ENCODE measurements at regions of chr20 and their contacts with region 1.

Region 1: DNA sequence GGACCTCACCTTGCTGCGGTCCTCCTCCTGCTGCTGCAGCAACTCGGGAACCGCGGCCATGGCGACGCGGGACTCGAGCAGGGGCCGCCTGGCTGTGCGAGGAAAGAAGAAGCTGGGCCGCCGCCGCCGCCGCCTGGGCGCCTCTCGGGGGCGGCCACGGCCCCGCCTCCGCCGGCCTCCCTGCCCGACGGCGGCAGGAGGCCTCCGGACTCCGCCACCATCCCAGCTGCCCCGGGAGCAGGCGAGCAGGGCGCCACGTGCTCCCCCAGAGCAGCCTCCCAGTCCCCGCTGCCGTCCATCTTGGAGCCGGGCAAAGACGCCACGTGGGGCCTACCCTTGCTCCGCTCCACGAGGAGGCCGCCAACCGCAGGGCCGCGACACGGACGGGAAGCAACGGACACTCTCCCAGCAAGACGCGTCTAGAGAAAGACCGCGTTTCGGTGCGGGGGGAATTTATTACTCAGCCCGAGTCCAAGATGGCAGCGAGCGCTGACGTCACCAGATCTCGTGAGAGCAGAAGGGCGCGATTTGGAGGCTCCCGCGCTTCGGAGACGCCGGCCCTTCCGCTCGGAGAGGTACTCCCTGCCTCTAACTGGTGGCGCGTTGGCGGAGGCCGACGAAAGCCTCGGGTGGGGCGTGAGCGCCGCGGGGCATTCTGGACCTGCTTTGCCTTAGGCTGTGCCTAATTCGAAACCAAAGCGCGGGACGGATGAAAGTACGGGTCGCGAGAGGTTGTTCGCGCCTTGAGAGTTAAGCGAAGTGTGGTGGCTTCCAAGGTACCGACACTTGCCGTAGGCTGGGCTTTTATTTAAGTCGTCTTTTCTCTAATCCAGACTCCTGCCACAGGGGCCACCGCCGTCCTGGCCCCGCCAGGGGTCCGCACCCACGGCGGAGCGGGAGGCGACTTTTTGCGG is at the starts of genes MGME1 and SNX5:
- DNase-seq: peak; percentile 100
- H3K4me3 Mint-ChIP-seq: peak within 1 kb of the TSS; percentile 96
- H3K27ac Mint-ChIP-seq: peak within 1 kb of the TSS; percentile 99
- H3K4me1 Mint-ChIP-seq: peaks cover 51% of the 10 kb centered on the region
- H3K27me3 Mint-ChIP-seq: no peaks in the 10 kb centered on the region
- total RNA-seq, gene MGME1: 32.7 and 34.3 TPM in 2 replicates
- total RNA-seq, gene SNX5: 230 and 240 TPM in 2 replicates

Region 2: DNA sequence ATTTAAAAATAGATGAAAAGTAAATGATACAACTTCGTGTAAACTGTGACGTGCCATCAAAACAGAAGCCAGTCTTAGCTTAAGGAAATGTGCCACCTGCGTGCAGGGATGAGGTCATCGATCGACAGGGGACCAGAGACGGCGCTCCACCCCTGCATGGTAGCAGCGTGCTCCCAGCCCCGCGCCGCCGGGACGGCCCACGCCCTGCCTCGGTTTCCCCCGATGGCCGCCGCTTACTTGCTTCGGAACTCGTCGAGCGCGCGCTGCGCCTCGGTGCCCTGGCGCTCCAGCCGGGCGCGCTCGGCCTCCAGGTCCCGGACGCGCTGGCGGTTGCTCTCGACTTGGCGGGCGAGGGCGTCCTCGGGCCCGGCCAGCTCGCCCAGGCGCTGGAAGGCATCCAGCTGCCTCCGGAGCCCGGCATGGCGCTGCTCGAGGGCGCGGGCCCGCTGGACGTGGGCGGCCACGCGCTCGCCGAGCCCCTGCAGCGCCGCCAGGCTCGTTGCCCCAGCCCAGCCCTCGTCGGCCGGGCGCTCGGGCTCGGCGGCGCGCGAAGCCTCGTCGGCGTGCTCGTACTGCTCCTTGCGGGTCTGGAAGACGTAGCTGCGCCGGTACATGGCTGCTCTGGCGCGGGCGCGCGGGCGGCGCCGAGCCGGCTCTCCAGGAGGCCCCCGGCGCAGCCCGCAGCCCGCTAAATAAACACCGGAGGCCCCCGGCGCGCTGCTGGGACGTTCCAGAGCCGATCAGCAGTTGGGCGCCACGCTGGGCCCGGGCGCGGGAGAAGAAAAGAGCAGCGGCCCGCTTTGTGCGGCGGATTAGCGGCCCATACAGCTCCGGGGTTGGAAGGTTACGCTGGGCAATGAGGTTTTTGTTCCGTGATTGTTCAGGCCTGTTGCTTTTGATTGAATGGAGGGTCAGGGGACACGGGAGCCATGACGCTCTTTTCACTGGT is 437.6 kb before region 1 on chr20 and contains the start of gene BFSP1:
- intact Hi-C with region 1: loop called (anchors 5 kb)
- DNase-seq: peak; percentile 86
- H3K4me3 Mint-ChIP-seq: peak within 1 kb of the TSS; percentile 91
- H3K27ac Mint-ChIP-seq: peak within 1 kb of the TSS; percentile 94
- H3K4me1 Mint-ChIP-seq: peaks cover 19% of the 10 kb centered on the region
- H3K27me3 Mint-ChIP-seq: peaks cover 9% of the 10 kb centered on the region
- total RNA-seq, gene BFSP1: 0.33 and 0.43 TPM in 2 replicates

Region 3: DNA sequence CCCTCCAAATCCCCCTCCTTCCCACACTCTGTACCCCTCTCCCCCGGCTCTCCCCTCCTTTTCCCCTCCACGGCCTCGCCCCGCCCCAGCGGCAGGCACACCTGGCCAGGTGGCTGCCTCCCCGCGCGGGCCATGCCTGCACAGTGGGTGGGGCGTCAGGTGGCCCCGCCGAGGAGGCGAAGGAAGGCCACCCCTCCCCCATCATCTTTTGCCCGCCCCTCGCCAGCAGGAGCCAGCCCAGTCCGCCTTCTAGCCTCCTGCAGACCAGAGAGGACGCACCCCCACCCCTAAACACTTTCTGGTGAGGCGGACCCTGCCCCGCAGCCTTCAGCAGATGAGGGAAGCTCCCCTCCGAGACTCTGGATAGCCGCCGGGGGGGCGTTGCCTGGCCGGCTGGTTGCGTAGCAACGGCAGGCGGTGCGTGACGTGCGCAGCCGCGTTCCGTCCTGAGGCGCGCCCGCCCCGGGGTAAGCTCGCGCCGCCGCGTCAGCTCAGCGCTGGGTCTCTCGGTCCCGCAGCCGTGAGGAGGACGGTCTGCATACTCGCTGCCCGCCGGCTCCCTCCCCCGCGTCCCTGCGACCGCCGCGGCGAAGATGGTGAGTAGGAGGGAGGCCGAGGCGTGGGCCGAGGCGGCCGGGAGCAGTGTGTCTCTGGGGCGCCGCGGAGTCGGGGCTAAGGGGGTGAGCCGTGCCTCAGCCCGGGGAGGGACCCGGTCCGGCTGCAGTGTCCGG is 398.8 kb before region 1 on chr20 and contains the start of gene DSTN:
- intact Hi-C with region 1: loop called (anchors 1 kb)
- DNase-seq: peak; percentile 97
- H3K4me3 Mint-ChIP-seq: peak within 1 kb of the TSS; percentile 94
- H3K27ac Mint-ChIP-seq: peak within 1 kb of the TSS; percentile 95
- H3K4me1 Mint-ChIP-seq: peaks cover 23% of the 10 kb centered on the region
- H3K27me3 Mint-ChIP-seq: peaks cover 9% of the 10 kb centered on the region
- total RNA-seq, gene DSTN: 58.6 and 65.6 TPM in 2 replicates

Region 4: DNA sequence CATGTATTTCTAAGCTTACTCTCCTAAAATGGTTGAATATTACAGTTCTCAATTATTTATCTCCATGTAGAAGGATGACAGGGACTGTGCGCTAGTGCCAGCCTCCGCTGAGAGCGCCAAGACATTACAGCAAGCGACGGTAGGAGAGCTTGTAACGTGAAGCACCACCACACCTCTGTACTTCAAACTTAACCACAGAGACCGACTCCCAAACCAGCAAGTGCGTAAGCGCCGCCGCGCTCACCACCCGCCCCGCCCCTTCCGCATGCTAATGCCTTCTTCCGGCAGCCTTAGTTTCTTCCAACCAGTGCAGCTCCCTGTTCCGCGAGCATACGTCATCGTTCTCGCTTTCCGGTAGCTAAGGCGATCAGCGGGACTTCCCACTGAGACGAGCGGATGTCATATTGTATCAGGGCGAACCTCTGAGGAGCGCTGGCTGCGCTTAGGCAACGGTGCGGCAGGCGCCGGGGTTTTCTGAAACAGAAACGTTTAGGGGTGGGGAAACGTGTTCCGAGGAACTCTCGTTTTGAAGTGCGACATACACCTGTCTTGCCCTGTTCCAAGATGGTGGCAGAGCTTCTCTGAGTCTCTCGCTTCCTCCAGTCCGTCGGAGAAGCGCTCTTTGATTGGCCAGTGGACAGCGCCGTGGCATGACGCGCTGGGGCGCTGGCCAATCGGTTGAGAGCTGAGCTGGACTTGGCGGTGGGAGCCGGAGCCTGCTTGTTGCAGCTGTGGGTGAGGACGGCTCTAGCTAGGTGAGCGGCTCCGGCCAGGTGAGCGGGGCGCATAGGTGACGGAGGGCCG is 538.8 kb after region 1 on chr20 and contains the start of gene SEC23B:
- intact Hi-C with region 1: loop called (anchors 1 kb)
- DNase-seq: peak; percentile 99
- H3K4me3 Mint-ChIP-seq: peak within 1 kb of the TSS; percentile 99
- H3K27ac Mint-ChIP-seq: peak within 1 kb of the TSS; percentile 99
- H3K4me1 Mint-ChIP-seq: peaks cover 33% of the 10 kb centered on the region
- H3K27me3 Mint-ChIP-seq: peaks cover 3% of the 10 kb centered on the region
- total RNA-seq, gene SEC23B: 108 TPM in 2 replicates

Measured in activated CD4-positive, alpha-beta T cell treated with anti-CD3 and anti-CD28 coated beads, Interleukin-2, amount 10 ng/mL, durations not matched to agents 24 days and 14 days (primary cell).